ENCODE measurements at regions of chr9 and their contacts with region 1.

Region 1: GRCh38 chr9:130128733-130129431 is 43.3 kb upstream of the NCS1 start:
- DNase-seq: peak; percentile 79
- ATAC-seq: peak; percentile 79
- H3K4me3 ChIP-seq: peak overlapping the region in 4 of 5 experiments; percentile 6 to 41 (median 30)
- H3K4me3 Mint-ChIP-seq: peak overlapping the region; percentile 82
- H3K27ac ChIP-seq: peak overlapping the region; percentile 81 to 96
- H3K27ac Mint-ChIP-seq: peak overlapping the region; percentile 97
- H3K4me1 ChIP-seq: peaks cover 32 to 37% of the 10 kb centered on the region in 2 donors
- H3K4me1 Mint-ChIP-seq: peaks cover 41% of the 10 kb centered on the region
- H3K27me3 ChIP-seq: no peaks in the 10 kb centered on the region
- H3K27me3 Mint-ChIP-seq: no peaks in the 10 kb centered on the region
- CTCF ChIP-seq: no peak

Region 2: DNA sequence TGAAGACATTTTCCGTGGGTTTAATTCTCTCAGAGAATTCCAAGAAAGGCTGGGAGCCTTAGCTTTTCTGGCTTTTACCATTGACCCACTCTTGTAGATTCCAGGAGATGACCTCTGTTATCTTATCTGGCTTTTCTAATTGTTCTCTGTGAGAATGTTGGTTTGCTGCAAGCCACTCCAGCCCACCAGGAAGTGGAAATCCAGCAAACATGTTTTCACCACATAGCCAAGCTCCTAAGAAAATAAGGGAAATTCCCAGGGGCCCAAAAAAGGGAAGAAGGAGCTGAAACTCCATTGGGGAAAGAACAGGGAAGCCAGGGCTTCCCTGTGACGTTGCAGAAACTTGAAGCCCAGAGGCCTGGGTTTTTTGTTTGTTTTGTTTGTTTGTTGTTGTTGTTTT is 55.5 kb before region 1 on chr9:
- CTCF ChIA-PET with region 1: no interaction called
- POLR2A ChIA-PET with region 1: no interaction called
- intact Hi-C with region 1: no loop called
- DNase-seq: no peak
- ATAC-seq: no peak
- H3K4me3 ChIP-seq: no peak overlapping the region
- H3K4me3 Mint-ChIP-seq: no peak overlapping the region
- H3K27ac ChIP-seq: no peak overlapping the region
- H3K27ac Mint-ChIP-seq: no peak overlapping the region
- H3K4me1 ChIP-seq: peaks cover 10% of the 10 kb centered on the region in 2 donors
- H3K4me1 Mint-ChIP-seq: peaks cover 21% of the 10 kb centered on the region
- H3K27me3 ChIP-seq: no peaks in the 10 kb centered on the region
- H3K27me3 Mint-ChIP-seq: no peaks in the 10 kb centered on the region
- CTCF ChIP-seq: no peak

Region 3: GRCh38 chr9:130235897-130236668 is 107.2 kb after region 1 on chr9:
- CTCF ChIA-PET with region 1: interaction called, 5 read pairs
- POLR2A ChIA-PET with region 1: interaction called, 5 read pairs
- intact Hi-C with region 1: loop called (anchors 1 kb)
- DNase-seq: peak; percentile 79
- ATAC-seq: no peak
- H3K4me3 ChIP-seq: no peak overlapping the region
- H3K4me3 Mint-ChIP-seq: peak overlapping the region; percentile 23
- H3K27ac ChIP-seq: no peak overlapping the region
- H3K27ac Mint-ChIP-seq: peak overlapping the region; percentile 15
- H3K4me1 ChIP-seq: peaks cover 18 to 28% of the 10 kb centered on the region in 2 donors
- H3K4me1 Mint-ChIP-seq: peaks cover 28% of the 10 kb centered on the region
- H3K27me3 ChIP-seq: peaks cover 0 to 12% (median 0%) of the 10 kb centered on the region in 4 experiments
- H3K27me3 Mint-ChIP-seq: peaks cover 3% of the 10 kb centered on the region
- CTCF ChIP-seq: peak; percentile 97

Region 4: DNA sequence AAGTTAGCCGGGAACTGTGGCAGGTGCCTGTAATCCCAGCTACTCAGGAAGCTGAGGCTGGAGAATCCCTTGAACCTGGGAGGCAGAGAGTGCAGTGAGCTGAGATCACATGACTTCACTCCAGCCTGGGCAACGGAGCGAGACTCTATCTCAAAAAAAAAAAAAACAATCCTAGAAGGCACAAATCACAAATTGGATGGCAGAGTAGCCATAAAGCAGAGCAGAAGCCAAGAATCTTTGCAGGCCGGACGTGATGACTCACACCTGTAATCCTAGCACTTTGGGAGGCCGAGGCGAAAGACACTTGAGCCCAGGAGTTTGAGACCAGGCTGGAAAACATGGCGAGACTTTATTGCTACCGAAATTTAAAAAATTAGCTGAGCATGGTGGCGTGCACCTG is 441.3 kb after region 1 on chr9:
- CTCF ChIA-PET with region 1: no interaction called
- POLR2A ChIA-PET with region 1: no interaction called
- intact Hi-C with region 1: no loop called
- DNase-seq: no peak
- ATAC-seq: no peak
- H3K4me3 ChIP-seq: no peak overlapping the region
- H3K4me3 Mint-ChIP-seq: no peak overlapping the region
- H3K27ac ChIP-seq: no peak overlapping the region
- H3K27ac Mint-ChIP-seq: no peak overlapping the region
- H3K4me1 ChIP-seq: no peaks in the 10 kb centered on the region
- H3K4me1 Mint-ChIP-seq: no peaks in the 10 kb centered on the region
- H3K27me3 ChIP-seq: peaks cover 0 to 4% (median 1%) of the 10 kb centered on the region in 4 experiments
- H3K27me3 Mint-ChIP-seq: peaks cover 20% of the 10 kb centered on the region
- CTCF ChIP-seq: no peak

Region 5: GRCh38 chr9:132090771-132091170 is 1961.9 kb after region 1 on chr9:
- CTCF ChIA-PET with region 1: no interaction called
- POLR2A ChIA-PET with region 1: no interaction called
- intact Hi-C with region 1: no loop called
- DNase-seq: no peak
- ATAC-seq: no peak
- H3K4me3 ChIP-seq: no peak overlapping the region
- H3K4me3 Mint-ChIP-seq: no peak overlapping the region
- H3K27ac ChIP-seq: no peak overlapping the region
- H3K27ac Mint-ChIP-seq: no peak overlapping the region
- H3K4me1 ChIP-seq: no peaks in the 10 kb centered on the region
- H3K4me1 Mint-ChIP-seq: no peaks in the 10 kb centered on the region
- H3K27me3 ChIP-seq: peaks cover 0 to 4% (median 0%) of the 10 kb centered on the region in 4 experiments
- H3K27me3 Mint-ChIP-seq: peaks cover 37% of the 10 kb centered on the region
- CTCF ChIP-seq: no peak

Measured in B cell (primary cell).